Endothelial cell of umbilical vein (primary cell): ENCODE measurements at regions of chr11 and their contacts with region 1.

Region 1: DNA sequence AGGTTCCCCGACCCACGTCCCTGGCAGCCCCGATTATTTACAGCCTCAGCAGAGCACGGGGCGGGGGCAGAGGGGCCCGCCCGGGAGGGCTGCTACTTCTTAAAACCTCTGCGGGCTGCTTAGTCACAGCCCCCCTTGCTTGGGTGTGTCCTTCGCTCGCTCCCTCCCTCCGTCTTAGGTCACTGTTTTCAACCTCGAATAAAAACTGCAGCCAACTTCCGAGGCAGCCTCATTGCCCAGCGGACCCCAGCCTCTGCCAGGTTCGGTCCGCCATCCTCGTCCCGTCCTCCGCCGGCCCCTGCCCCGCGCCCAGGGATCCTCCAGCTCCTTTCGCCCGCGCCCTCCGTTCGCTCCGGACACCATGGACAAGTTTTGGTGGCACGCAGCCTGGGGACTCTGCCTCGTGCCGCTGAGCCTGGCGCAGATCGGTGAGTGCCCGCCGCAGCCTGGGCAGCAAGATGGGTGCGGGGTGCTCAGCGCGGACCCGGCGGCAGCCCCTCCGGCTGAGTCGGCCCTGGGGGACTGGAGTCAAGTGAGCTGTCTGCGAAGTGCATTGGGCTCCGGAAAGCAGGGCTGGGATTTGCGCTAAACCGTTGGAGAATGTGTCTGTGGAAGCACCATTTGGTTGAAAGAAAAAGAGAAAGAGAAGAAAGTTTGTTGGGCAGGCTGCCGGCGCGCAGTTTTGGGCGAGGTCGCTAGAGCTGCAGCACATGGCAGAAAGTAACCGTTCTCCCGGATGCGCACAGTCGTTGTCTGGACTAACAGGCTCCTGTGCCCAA is at the start of gene CD44:
- DNase-seq: peak; percentile 44
- H3K4me3 ChIP-seq: peak within 1 kb of the TSS; percentile 53 to 64 (median 57)
- H3K27ac ChIP-seq: peak within 1 kb of the TSS; percentile 18
- H3K4me1 ChIP-seq: peaks cover 23% of the 10 kb centered on the region
- H3K27me3 ChIP-seq: peaks cover 0 to 15% of the 10 kb centered on the region in 2 experiments
- CTCF ChIP-seq: no peak
- POLR2A ChIP-seq: peak; percentile 48
- total RNA-seq, gene CD44: 26.3 and 68.3 TPM in 2 replicates

Region 2: DNA sequence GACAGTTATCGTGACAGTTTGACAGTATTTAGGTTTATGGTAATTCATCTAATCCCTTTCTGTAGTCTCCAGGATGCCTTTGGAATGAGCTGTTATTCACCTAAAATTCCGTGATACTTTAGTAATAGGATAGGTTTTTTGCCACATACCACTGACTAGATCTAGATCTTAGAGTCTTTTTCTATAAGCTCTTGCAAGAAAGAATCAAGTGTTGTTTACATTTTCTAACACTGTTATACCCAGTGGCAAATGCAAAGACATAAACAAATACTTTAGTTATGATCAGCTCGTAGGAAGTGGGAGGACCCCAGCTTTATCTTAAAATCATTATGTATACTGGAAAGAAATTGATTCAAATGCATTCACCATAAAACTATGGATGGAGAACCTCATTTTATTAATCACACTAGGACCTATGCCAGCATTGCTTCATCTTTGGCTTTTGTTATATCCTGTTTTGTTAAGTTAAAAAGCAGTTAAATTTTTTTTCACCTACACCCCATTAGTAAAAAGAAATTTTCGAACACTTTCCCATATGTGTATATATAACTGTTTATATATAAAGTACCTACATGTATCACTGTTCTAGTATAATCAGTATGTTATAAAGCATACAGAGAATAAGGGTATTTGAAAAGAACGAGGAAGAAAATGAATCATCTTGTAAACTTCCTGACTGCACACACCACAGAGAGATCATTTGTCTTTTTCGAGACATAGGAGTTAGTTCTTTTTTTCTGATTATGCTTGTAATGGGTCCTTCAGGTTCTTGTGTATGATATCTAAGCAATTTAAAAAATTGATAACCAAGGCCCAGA is 161.8 kb before region 1 on chr11:
- CTCF ChIA-PET with region 1: no interaction called
- POLR2A ChIA-PET with region 1: no interaction called
- dilution Hi-C with region 1: no loop called
- intact Hi-C with region 1: loop called (anchors 2 kb)
- DNase-seq: peak; percentile 79
- H3K4me3 ChIP-seq: peak overlapping the region in 2 of 3 experiments; percentile 23 to 42
- H3K27ac ChIP-seq: peak overlapping the region; percentile 75
- H3K4me1 ChIP-seq: peaks cover 41% of the 10 kb centered on the region
- H3K27me3 ChIP-seq: no peaks in the 10 kb centered on the region
- CTCF ChIP-seq: no peak
- POLR2A ChIP-seq: no peak

Region 3: GRCh38 chr11:34997952-34998528 is 141.1 kb before region 1 on chr11:
- CTCF ChIA-PET with region 1: interaction called, 9 read pairs
- POLR2A ChIA-PET with region 1: no interaction called
- dilution Hi-C with region 1: no loop called
- intact Hi-C with region 1: loop called (anchors 2 kb)
- DNase-seq: peak; percentile 26
- H3K4me3 ChIP-seq: no peak overlapping the region
- H3K27ac ChIP-seq: no peak overlapping the region
- H3K4me1 ChIP-seq: peaks cover 4% of the 10 kb centered on the region
- H3K27me3 ChIP-seq: no peaks in the 10 kb centered on the region
- CTCF ChIP-seq: no peak
- POLR2A ChIP-seq: no peak

Region 4: GRCh38 chr11:35165423-35166368 is 26.6 kb after region 1 on chr11:
- CTCF ChIA-PET with region 1: interaction called, 20 read pairs
- POLR2A ChIA-PET with region 1: no interaction called
- dilution Hi-C with region 1: no loop called
- intact Hi-C with region 1: loop called (anchors 2 kb)
- DNase-seq: peak; percentile 48
- H3K4me3 ChIP-seq: no peak overlapping the region
- H3K27ac ChIP-seq: peak overlapping the region; percentile 84
- H3K4me1 ChIP-seq: peaks cover 39% of the 10 kb centered on the region
- H3K27me3 ChIP-seq: no peaks in the 10 kb centered on the region
- CTCF ChIP-seq: no peak
- POLR2A ChIP-seq: no peak

Region 5: GRCh38 chr11:35192347-35192746 is 53.2 kb after region 1 on chr11:
- CTCF ChIA-PET with region 1: interaction called, 3 read pairs
- POLR2A ChIA-PET with region 1: no interaction called
- dilution Hi-C with region 1: no loop called
- intact Hi-C with region 1: loop called (anchors 2 kb)
- DNase-seq: peak; percentile 37
- H3K4me3 ChIP-seq: no peak overlapping the region
- H3K27ac ChIP-seq: no peak overlapping the region
- H3K4me1 ChIP-seq: peaks cover 11% of the 10 kb centered on the region
- H3K27me3 ChIP-seq: no peaks in the 10 kb centered on the region
- CTCF ChIP-seq: no peak
- POLR2A ChIP-seq: no peak

Region 6: DNA sequence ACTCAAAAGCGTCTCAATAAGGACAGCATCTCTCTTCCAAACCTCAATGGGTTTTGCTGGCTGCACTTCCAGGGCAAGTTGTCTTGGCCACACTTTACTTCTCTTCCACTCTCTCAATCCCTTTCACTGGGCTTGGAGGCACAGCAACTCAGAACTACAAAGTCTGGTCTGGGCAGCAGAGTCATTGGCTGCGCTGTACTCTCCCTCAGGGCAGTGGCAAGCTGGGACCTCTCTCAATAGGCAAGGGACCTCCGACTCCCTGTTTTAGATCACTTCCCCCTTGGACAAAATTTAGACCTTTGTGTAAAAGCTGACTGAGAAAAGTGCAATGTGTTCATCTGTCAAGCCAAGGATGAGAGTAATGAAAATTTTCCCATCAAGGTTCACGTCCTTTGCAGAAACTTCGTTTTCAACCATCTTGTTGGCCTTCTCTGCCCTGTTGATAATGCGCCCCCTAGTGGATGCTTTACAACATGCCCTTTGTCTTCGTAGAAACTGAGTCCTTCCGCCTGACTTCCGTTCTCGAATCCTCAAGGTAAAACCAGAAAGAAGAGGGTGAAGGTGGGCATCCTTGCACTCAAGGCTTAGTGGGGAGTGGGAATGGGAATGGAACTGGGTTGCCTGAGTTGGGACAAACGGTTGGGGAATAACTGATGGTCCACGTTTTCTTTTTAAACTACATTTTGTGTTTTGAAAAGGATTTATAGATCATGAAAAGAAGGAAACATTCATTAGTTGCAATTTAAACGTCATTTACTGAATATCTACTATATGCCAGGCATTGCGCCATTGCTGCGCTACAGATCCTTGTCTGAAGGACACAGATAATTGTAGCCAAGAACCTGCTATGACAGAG is 99.0 kb after region 1 on chr11:
- CTCF ChIA-PET with region 1: interaction called, 3 read pairs
- POLR2A ChIA-PET with region 1: no interaction called
- dilution Hi-C with region 1: no loop called
- intact Hi-C with region 1: loop called (anchors 5 kb)
- DNase-seq: peak; percentile 70
- H3K4me3 ChIP-seq: no peak overlapping the region
- H3K27ac ChIP-seq: no peak overlapping the region
- H3K4me1 ChIP-seq: no peaks in the 10 kb centered on the region
- H3K27me3 ChIP-seq: peaks cover 5 to 21% of the 10 kb centered on the region in 2 experiments
- CTCF ChIP-seq: peak; percentile 78 to 81
- POLR2A ChIP-seq: no peak